Left cardiac atrium (tissue), 4 donors: ENCODE measurements at regions of chr4 and their contacts with region 1.

Region 1: GRCh38 chr4:112704991-112705845 is 68.3 kb downstream of the LARP7 start:
- DNase-seq: peak; percentile 67
- ATAC-seq: peak; percentile 85 to 90

Region 2: DNA sequence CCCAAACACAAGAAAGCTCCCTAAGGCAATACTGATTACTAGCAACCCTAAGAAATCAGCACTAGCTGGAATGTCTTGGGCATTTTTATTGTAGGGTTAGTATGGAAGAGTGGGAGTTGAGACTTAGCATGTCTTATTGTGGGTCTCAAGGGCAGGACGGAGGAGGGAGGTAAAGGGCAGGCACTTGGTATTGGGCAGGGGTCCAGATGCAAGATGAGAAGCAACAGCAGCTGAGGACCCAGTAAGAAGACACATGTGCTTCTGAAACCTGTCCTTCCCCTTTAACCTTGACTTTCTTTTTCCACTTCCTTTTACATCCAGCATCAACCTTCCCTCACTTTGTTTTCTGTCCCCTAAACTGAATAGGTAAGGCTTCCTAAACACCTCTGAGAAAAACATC is 30.8 kb before region 1 on chr4:
- intact Hi-C with region 1: loop called in 1 of 2 experiments (anchors 5 kb)
- DNase-seq: no peak
- ATAC-seq: no peak

Region 3: GRCh38 chr4:112765317-112765975 is 60.2 kb after region 1 on chr4:
- intact Hi-C with region 1: no loop called
- DNase-seq: no peak
- ATAC-seq: peak in 1 of 2 donors; percentile 53